ENCODE measurements at regions of chr12 and their contacts with region 1.

Region 1: DNA sequence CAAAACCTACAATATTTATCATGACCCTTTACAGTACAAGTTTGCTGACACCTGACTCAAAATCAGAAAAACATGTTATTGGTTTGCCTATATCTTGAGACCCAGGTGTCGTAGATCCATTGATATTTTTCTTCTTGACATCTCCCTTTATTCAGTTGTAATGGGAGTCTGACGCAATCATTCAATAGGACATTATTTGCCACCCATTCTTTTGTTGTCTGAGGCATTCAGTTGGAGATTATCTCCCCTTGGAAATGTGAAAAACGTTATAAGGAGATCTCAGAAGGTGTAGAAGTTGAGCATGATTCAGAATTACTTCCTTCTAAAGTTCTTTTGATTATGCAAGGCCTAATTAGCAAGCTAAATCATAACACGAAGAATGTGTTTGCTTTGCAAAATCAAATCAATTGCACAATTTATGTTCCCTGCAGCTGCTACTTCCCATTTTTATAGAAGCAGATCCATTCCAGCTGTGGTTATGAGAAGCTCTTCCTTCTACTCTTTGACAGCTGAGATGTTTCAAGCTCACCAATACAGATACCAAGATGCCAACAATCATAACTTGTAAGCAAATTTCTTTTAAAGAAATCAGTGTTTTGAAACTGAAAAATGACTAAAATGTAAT is 228.2 kb upstream of the SYT1 start:
- DNase-seq: no peak
- ATAC-seq: no peak
- H3K4me3 ChIP-seq: no peak overlapping the region
- H3K27ac ChIP-seq: no peak overlapping the region
- H3K4me1 ChIP-seq: no peaks in the 10 kb centered on the region
- H3K27me3 ChIP-seq: no peaks in the 10 kb centered on the region
- CTCF ChIP-seq: no peak

Region 2: GRCh38 chr12:76957301-76957700 is 1679.0 kb before region 1 on chr12:
- intact Hi-C with region 1: loop called in 1 of 2 experiments (anchors 5 kb)
- DNase-seq: no peak
- ATAC-seq: no peak
- H3K4me3 ChIP-seq: no peak overlapping the region
- H3K27ac ChIP-seq: no peak overlapping the region
- H3K4me1 ChIP-seq: no peaks in the 10 kb centered on the region
- H3K27me3 ChIP-seq: no peaks in the 10 kb centered on the region
- CTCF ChIP-seq: no peak

Region 3: GRCh38 chr12:78651755-78652154 is 15.4 kb after region 1 on chr12:
- intact Hi-C with region 1: no loop called
- DNase-seq: no peak
- ATAC-seq: no peak
- H3K4me3 ChIP-seq: no peak overlapping the region
- H3K27ac ChIP-seq: no peak overlapping the region
- H3K4me1 ChIP-seq: no peaks in the 10 kb centered on the region
- H3K27me3 ChIP-seq: no peaks in the 10 kb centered on the region
- CTCF ChIP-seq: no peak

Measured in psoas muscle (tissue), 8 donors.